GM18951 (cell line): ENCODE measurements at regions of chrX and their contacts with region 1.

Region 1: DNA sequence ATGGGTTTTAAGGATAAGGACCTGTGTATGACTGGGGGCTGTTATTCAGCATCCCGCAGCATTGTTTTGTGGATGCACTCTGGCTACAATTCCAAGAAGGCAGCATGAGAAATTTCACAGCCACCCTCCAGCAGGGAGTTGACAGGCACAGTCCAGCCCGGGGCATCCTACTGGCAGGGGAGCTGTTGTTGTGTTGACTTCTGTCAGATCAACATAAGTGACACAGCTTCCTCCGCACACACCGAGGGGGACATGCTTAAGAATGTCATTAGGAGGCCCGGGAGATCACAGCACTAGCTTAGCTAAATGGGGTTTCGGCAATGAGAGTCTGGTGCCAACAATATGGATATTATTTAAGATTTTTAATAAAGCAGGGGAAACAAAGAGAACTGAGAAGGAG is 326.5 kb downstream of the ASMT start:
- POLR2A ChIP-seq: no peak

Region 2: GRCh38 chrX:2136864-2137263 is 195.5 kb after region 1 on chrX:
- in situ Hi-C with region 1: loop called (anchors 5 kb)
- POLR2A ChIP-seq: no peak

Region 3: DNA sequence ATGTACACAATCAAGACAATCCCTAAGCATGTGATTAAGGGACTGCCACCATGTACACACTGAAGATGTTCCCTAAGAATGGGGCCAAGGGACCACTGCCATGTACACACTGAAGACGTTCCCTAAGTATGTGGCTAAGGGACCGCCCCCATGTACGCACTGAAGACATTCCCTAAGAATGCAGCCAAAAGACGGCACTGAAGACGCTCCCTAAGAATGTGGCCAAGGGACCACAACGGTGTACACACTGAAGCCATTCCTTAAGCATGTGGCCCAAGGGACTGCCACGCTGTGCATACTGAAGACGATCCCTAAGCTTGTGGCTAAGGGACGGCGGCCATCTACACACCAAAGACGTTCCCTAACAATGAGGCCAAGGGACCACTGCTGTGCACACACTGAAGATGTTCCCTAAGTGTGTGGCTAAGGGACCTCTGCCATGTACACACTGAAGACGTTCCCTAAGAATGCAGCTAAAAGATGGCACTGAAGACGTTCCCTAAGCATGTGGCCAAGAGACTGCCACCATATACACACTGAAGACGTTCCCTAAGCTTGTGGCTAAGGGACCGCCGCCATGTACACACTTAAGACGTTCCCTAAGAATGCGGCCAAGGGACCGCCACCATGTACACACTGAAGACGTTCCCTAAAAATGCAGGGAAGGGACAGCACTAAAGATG is 533.1 kb after region 1 on chrX:
- in situ Hi-C with region 1: no loop called
- POLR2A ChIP-seq: no peak

Region 4: DNA sequence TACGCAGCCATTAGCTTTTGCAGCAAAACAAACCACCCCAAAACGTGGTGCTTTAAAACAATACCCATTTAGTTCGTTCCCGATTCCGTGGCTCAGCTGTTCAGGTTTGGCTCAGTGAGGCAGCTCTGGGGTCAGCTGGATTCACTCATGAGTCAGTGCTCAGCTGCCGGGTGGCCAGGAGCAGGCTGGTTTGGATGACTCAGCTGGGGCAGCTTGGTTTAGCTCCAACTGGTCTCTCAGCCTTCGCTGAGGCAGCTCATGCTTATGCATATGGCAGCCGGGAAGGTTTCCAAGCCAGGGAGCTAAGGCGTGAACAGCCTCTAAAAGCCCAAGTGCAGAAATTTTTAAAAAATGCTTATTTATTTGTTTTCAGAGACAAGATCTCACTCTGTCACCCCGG is 736.4 kb after region 1 on chrX:
- in situ Hi-C with region 1: no loop called
- POLR2A ChIP-seq: no peak